ENCODE measurements at regions of chr4 and their contacts with region 1.

Region 1: GRCh38 chr4:70687821-70688794 is at the start of gene UTP3:
- DNase-seq: peak; percentile 90 to 96 (median 94)
- H3K4me3 ChIP-seq: peak within 1 kb of the TSS; percentile 62 to 99 (median 93)
- H3K27ac ChIP-seq: peak within 1 kb of the TSS; percentile 67 to 99 (median 94)
- H3K27me3 ChIP-seq: no peaks in the 10 kb centered on the region
- CTCF ChIP-seq: peak; percentile 87 to 100 (median 97)
- total RNA-seq, gene UTP3: 13.8 to 28.6 (median 21.3) TPM

Region 2: GRCh38 chr4:70651864-70652506 is 36.1 kb before region 1 on chr4:
- intact Hi-C with region 1: loop called in 1 of 2 experiments (anchors 5 kb)
- DNase-seq: no peak
- H3K4me3 ChIP-seq: peak overlapping the region in 7 of 59 donors; percentile 3 to 33 (median 16)
- H3K27ac ChIP-seq: peak overlapping the region in 1 of 59 donors; percentile 33
- H3K27me3 ChIP-seq: peaks cover 0 to 2% (median 0%) of the 10 kb centered on the region in 45 donors
- CTCF ChIP-seq: peak in 55 of 56 donors; percentile 39 to 78 (median 58)

Region 3: DNA sequence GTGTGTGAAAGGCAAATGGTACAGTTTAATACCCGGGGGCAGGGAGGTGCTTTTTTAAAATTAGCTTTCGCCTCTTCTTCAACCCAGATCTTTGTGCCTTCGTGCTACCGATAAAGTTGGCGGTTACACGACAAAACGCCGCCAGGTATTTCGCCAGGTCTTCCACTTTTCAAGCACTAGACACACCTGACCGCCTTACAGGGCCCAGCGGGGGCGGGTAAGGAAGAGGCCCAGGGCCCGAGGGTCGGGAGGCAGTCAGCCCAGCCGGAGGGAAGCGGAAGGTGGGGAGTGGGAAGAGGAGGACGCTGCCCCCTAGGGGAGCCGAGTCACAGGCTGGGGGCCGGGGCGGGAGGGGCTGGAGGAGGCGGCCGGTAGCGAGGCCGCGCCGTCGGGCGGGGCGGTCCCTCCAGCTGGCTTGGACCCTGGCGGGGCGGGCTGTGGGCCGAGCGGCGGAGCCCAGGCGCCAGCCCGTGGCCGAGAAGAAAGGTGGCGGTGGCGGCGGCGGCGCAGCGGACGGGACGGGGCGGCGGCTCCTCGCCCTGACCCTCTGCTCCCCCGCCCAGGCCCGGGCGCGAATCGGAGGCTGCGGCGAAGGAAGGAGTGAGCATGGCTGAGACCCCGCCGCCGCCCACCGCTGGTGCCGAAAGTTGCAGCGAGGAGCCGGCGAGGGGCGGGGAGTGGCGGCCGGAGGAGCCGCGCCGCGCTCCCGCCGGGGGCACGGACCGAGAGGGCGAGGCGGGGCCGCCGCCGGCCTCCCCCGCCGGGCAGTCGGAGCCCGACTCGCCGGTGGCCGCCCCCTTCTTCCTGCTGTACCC is 16.4 kb after region 1 on chr4:
- intact Hi-C with region 1: loop called (anchors 2 kb)
- DNase-seq: peak; percentile 36 to 82 (median 60)
- H3K4me3 ChIP-seq: peak overlapping the region; percentile 61 to 94 (median 85)
- H3K27ac ChIP-seq: peak overlapping the region; percentile 48 to 97 (median 90)
- H3K27me3 ChIP-seq: no peaks in the 10 kb centered on the region
- CTCF ChIP-seq: peak in 42 of 56 donors; percentile 3 to 63 (median 30)

Region 4: DNA sequence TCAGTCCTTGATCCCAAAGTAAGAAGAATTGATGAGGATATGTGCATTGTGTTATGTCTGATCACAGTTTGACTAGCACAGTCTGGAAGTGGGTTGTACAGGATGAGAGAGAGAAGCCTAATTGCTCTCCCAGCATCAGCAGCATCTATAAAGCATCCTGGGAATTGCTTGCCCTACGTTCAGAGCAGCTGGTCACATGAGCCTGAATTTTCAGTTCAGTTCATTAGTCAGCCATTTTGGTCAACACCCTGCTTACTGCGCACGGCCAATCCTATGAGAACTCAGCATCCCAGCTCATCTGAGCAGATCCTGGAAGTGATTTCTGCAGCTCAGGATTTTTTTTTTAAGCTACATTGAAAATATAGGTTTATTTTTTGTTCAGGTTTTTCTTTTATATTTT is 33.6 kb after region 1 on chr4 and contains the start of gene RUFY3:
- intact Hi-C with region 1: loop called (anchors 5 kb)
- DNase-seq: peak in 9 of 10 donors; percentile 66 to 90 (median 79)
- H3K4me3 ChIP-seq: peak within 1 kb of the TSS; percentile 31 to 92 (median 75)
- H3K27ac ChIP-seq: peak within 1 kb of the TSS; percentile 75 to 98 (median 92)
- H3K27me3 ChIP-seq: no peaks in the 10 kb centered on the region
- CTCF ChIP-seq: peak in 21 of 56 donors; percentile 3 to 53 (median 29)
- total RNA-seq, gene RUFY3: 148 to 276 (median 235) TPM

Region 5: GRCh38 chr4:70839589-70840093 is 151.5 kb after region 1 on chr4 and contains the start of gene GRSF1:
- intact Hi-C with region 1: loop called (anchors 2 to 5 kb)
- DNase-seq: peak; percentile 80 to 95 (median 90)
- H3K4me3 ChIP-seq: peak within 1 kb of the TSS; percentile 45 to 96 (median 85)
- H3K27ac ChIP-seq: peak within 1 kb of the TSS; percentile 41 to 97 (median 88)
- H3K27me3 ChIP-seq: no peaks in the 10 kb centered on the region
- CTCF ChIP-seq: peak in 29 of 56 donors; percentile 6 to 49 (median 24)
- total RNA-seq, gene GRSF1: 49.9 to 98.5 (median 76.9) TPM

Region 6: GRCh38 chr4:70874268-70875156 is 186.4 kb after region 1 on chr4:
- intact Hi-C with region 1: no loop called
- DNase-seq: no peak
- H3K4me3 ChIP-seq: no peak overlapping the region
- H3K27ac ChIP-seq: no peak overlapping the region
- H3K27me3 ChIP-seq: no peaks in the 10 kb centered on the region
- CTCF ChIP-seq: no peak

Region 7: GRCh38 chr4:70993181-70994068 is 305.3 kb after region 1 on chr4 and contains the start of gene DCK:
- intact Hi-C with region 1: loop called in 1 of 2 experiments (anchors 5 kb)
- DNase-seq: peak; percentile 71 to 95 (median 86)
- H3K4me3 ChIP-seq: peak within 1 kb of the TSS; percentile 64 to 95 (median 88)
- H3K27ac ChIP-seq: peak within 1 kb of the TSS; percentile 52 to 97 (median 88)
- H3K27me3 ChIP-seq: no peaks in the 10 kb centered on the region
- CTCF ChIP-seq: peak in 34 of 56 donors; percentile 4 to 61 (median 26)
- total RNA-seq, gene DCK: 12.5 to 37.5 (median 22.1) TPM